RWPE1 (cell line): ENCODE measurements at regions of chr15 and their contacts with region 1.

Region 1: GRCh38 chr15:40702077-40702476 is 7.1 kb downstream of the RAD51 start:
- DNase-seq: no peak
- H3K27ac ChIP-seq: no peak overlapping the region
- CTCF ChIP-seq: no peak

Region 2: GRCh38 chr15:40731034-40731433 is 29.0 kb after region 1 on chr15:
- CTCF ChIA-PET with region 1: no interaction called
- POLR2A ChIA-PET with region 1: interaction called, 10 read pairs
- DNase-seq: no peak
- H3K27ac ChIP-seq: no peak overlapping the region
- CTCF ChIP-seq: no peak

Region 3: GRCh38 chr15:40838776-40839175 is 136.7 kb after region 1 on chr15:
- CTCF ChIA-PET with region 1: no interaction called
- POLR2A ChIA-PET with region 1: no interaction called
- DNase-seq: no peak
- H3K27ac ChIP-seq: peak overlapping the region; percentile 1; the same call in 1 of the 2 replicates
- CTCF ChIP-seq: no peak